ENCODE measurements at regions of chr22 and their contacts with region 1.

Region 1: DNA sequence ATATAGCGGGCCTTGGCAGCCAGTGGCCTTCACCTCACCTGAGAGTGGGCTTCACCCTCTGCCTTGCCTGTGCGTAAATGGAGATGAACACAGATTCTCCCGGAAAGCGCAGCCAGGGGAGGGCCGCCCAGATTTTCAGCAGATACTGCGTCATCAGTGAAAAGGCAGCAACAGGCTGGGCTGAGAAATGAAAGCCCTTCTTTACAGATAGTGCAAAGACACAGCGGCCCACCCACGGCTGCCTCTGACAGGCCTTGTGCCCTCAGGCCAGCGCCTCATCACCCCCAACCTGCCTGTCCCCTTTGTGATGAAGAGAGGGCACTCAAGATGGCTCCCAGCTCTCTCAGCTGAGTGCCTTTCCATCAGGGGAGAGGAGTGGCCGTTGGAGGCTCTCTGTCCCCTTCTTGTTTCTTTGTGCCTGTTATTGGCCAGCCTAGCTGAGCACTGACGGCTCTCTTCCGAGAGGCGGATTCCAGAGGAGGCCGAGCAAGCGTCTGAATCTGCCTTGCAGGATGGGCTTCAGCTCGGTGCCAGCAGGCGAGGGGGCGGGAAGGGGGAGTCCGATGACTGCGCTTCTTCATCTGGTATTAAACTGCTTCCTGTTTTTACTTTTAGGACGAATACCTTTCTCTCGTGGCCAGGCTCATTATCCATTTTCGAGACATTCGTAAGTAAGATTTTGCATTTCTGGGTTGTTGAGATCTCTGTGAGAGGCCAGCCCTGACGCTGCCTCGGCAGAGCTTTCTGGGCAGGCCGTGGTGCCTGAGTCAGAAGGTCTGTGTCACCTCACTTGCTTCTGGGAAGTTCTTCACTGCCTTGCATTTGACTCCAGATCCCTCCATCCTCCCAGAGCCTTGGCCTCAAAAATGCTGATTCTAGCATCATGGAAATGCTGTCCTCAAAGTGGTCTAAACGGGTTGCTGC is 43.7 kb downstream of the MED15 start:
- DNase-seq: peak; percentile 59
- H3K4me3 Mint-ChIP-seq: peak overlapping the region; percentile 74
- H3K27ac Mint-ChIP-seq: peak overlapping the region; percentile 99
- H3K4me1 Mint-ChIP-seq: peaks cover 90% of the 10 kb centered on the region
- H3K27me3 Mint-ChIP-seq: no peaks in the 10 kb centered on the region

Region 2: DNA sequence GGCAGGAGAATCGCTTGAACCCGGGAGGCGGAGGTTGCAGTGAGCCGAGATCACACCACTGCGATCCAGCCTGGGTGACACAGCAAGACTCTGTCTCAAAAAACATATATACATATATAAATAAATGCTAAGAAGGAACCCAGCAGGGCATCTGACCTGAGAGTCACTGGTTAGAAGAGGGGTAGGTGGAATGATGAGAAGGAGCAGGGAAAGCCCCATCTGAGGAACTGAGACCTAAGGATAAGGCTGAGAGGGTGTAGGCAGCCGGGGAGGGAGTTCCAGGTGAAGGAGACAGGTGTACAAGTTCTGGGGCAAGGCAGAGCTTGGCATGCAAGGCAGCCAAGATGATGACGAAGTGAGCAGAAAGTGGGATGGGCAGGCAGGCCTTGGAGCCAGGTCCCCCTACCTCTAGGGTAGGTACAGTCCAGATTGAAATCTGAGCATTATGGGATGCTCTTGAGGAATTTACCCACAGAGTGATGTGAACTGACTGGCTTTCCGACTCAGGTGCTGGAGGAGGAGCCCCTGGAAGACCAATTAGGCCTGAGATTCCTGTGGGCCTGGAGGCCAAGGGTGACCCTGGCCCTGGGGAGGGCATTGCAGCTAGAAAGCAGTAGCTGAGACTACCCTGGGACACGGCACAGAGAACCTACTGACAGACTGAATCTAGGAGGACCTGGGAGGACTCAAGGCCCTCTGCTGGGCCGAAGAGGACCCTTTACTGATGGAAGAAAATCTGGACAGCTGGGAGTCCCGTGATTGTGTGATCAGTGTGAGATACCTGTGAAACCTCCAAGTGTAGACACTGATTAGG is 78.2 kb before region 1 on chr22:
- CTCF ChIA-PET with region 1: no interaction called
- POLR2A ChIA-PET with region 1: no interaction called
- DNase-seq: no peak
- H3K4me3 Mint-ChIP-seq: no peak overlapping the region
- H3K27ac Mint-ChIP-seq: no peak overlapping the region
- H3K4me1 Mint-ChIP-seq: peaks cover 36% of the 10 kb centered on the region
- H3K27me3 Mint-ChIP-seq: no peaks in the 10 kb centered on the region

Region 3: DNA sequence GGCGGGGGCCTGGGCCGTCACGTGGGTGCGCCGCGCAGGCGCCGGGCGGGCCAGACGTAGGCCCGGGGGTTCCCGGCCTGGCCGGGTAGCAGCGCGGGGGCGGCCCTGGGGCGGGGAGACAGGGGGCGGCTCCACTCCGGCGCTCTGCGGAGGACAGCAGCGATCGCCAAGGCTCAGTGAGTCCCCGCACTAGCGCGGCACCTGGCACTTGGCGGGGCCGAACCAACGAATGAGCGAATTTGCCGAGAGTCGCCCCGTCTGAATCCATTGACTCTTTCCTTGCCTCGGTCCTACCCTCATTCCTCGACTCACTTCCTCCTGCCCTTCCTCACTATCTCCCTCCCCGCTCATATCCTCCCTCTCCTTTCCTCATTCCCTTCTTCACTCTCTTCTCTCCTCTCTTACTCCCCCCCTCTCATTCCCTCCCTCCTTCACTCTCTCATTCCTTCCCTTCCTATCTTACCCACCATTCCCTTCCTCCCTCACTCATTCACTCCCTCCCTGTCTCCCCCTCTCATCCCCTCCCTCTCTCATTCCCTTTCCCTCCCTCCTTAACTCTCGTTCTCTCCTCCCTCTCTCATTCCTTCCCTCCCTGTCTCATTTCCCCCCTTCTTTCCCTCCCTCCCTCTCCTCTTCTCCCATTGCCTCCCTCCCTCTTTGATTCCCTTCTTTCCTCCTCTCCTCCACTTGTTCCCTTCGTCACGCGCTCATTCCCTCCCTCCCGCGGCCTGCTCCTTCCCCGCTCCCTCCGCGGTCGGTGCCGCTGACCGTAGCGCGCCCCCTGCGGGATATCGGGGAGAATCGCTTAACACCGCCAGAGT is 55.0 kb before region 1 on chr22:
- CTCF ChIA-PET with region 1: interaction called, 3 read pairs
- POLR2A ChIA-PET with region 1: interaction called, 10 read pairs
- DNase-seq: peak; percentile 92
- H3K4me3 Mint-ChIP-seq: peak overlapping the region; percentile 88
- H3K27ac Mint-ChIP-seq: peak overlapping the region; percentile 58
- H3K4me1 Mint-ChIP-seq: peaks cover 34% of the 10 kb centered on the region
- H3K27me3 Mint-ChIP-seq: no peaks in the 10 kb centered on the region

Region 4: GRCh38 chr22:20523086-20523983 is 27.7 kb before region 1 on chr22:
- CTCF ChIA-PET with region 1: no interaction called
- POLR2A ChIA-PET with region 1: interaction called, 396 read pairs
- DNase-seq: peak; percentile 36
- H3K4me3 Mint-ChIP-seq: no peak overlapping the region
- H3K27ac Mint-ChIP-seq: peak overlapping the region; percentile 63
- H3K4me1 Mint-ChIP-seq: peaks cover 64% of the 10 kb centered on the region
- H3K27me3 Mint-ChIP-seq: no peaks in the 10 kb centered on the region

Region 5: GRCh38 chr22:20568989-20569769 is 18.1 kb after region 1 on chr22:
- CTCF ChIA-PET with region 1: interaction called, 313 read pairs
- POLR2A ChIA-PET with region 1: interaction called, 320 read pairs
- DNase-seq: peak; percentile 92
- H3K4me3 Mint-ChIP-seq: peak overlapping the region; percentile 54
- H3K27ac Mint-ChIP-seq: peak overlapping the region; percentile 96
- H3K4me1 Mint-ChIP-seq: peaks cover 86% of the 10 kb centered on the region
- H3K27me3 Mint-ChIP-seq: no peaks in the 10 kb centered on the region

Region 6: DNA sequence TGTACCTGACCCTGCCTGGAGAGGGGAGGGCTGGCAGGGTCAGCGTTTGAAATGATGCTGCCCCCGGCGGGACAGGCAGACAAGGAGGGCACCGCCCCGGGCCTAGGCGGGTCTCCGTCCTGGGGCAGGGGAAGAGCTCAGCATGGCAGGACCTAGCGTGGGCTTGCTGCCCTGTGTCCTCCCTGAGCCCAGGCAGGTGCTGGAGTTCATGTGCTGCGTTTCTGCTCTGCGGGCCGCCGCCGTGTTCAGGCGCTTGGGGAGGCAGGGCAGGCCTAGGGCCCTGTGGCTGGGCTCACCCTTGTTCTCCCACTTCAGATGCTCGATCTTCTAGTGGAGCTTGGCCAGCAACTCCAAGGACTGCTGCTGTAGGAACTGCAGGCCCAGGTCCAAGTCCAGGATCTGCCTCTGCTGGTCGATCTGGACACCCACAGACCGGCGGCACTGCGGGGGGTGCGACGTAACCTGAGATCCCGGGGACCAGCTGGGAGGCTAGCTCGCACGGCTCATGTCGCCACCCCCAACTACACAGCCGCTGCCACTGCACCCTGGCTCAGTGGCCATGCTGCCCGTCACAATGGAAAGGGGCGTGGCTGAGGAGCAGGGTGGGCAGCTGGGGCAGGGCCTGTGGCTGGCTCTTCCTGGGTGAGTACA is 40.7 kb after region 1 on chr22:
- CTCF ChIA-PET with region 1: no interaction called
- POLR2A ChIA-PET with region 1: no interaction called
- DNase-seq: no peak
- H3K4me3 Mint-ChIP-seq: no peak overlapping the region
- H3K27ac Mint-ChIP-seq: no peak overlapping the region
- H3K4me1 Mint-ChIP-seq: no peaks in the 10 kb centered on the region
- H3K27me3 Mint-ChIP-seq: no peaks in the 10 kb centered on the region